ENCODE measurements at regions of chr7 and their contacts with region 1.

Region 1: GRCh38 chr7:143008007-143008901 is 18.7 kb downstream of the OR9A2 start:
- DNase-seq: peak; percentile 48 to 91 (median 75)
- ATAC-seq: peak; percentile 85 to 94 (median 90)
- H3K4me3 ChIP-seq: no peak overlapping the region
- H3K4me3 Mint-ChIP-seq: no peak overlapping the region
- H3K27ac ChIP-seq: no peak overlapping the region
- H3K27ac Mint-ChIP-seq: no peak overlapping the region
- H3K4me1 ChIP-seq: peaks cover under 1 to 2% of the 10 kb centered on the region in 2 experiments
- H3K4me1 Mint-ChIP-seq: peaks cover 4 to 7% (median 5%) of the 10 kb centered on the region in 3 donors
- H3K27me3 ChIP-seq: peaks cover 0 to 7% of the 10 kb centered on the region in 2 experiments
- H3K27me3 Mint-ChIP-seq: peaks cover 5 to 10% of the 10 kb centered on the region in 2 donors

Region 2: DNA sequence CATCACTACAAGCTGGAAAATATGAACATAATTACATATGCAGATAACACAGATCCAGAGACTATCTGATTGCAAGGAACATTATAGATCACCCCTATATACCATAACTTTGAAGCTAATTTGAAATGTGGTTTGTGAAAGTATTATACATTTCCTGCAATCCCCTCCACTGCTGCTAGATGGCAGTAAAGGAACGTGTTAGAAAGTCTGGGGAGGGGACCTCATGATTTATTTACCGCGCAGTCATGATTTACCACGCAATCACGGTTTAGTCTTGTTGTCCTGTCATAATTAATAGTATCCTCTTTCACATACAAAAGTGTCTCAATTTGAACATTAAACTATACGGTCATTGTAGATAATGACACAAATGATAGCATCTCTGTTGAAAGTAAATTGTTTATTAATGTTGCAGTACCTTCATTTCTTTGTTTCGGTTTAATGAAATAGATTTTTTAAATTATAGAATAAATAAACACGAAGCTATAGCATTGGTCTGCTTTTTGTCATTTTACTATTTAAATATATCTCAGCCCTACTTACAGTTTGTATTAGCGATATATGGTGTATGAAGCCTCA is 404.3 kb before region 1 on chr7:
- CTCF ChIA-PET with region 1: interaction called in 1 of 2 experiments, 10 read pairs
- POLR2A ChIA-PET with region 1: no interaction called
- DNase-seq: peak in 29 of 35 experiments; percentile 8 to 75 (median 41)
- ATAC-seq: peak in 1 of 4 experiments; percentile 46
- H3K4me3 ChIP-seq: no peak overlapping the region
- H3K4me3 Mint-ChIP-seq: no peak overlapping the region
- H3K27ac ChIP-seq: no peak overlapping the region
- H3K27ac Mint-ChIP-seq: peak overlapping the region; percentile 41 to 61
- H3K4me1 ChIP-seq: no peaks in the 10 kb centered on the region
- H3K4me1 Mint-ChIP-seq: peaks cover 2 to 12% (median 9%) of the 10 kb centered on the region in 3 donors
- H3K27me3 ChIP-seq: no peaks in the 10 kb centered on the region
- H3K27me3 Mint-ChIP-seq: peaks cover 0 to 9% of the 10 kb centered on the region in 2 donors